ENCODE measurements at regions of chr1 and their contacts with region 1.

Region 1: GRCh38 chr1:145891587-145892485 is 6.2 kb upstream of the ANKRD35 start:
- DNase-seq: peak; percentile 98
- H3K4me3 ChIP-seq: peak overlapping the region; percentile 33
- H3K27ac ChIP-seq: peak overlapping the region; percentile 99
- H3K27me3 ChIP-seq: no peaks in the 10 kb centered on the region
- CTCF ChIP-seq: peak; percentile 93

Region 2: DNA sequence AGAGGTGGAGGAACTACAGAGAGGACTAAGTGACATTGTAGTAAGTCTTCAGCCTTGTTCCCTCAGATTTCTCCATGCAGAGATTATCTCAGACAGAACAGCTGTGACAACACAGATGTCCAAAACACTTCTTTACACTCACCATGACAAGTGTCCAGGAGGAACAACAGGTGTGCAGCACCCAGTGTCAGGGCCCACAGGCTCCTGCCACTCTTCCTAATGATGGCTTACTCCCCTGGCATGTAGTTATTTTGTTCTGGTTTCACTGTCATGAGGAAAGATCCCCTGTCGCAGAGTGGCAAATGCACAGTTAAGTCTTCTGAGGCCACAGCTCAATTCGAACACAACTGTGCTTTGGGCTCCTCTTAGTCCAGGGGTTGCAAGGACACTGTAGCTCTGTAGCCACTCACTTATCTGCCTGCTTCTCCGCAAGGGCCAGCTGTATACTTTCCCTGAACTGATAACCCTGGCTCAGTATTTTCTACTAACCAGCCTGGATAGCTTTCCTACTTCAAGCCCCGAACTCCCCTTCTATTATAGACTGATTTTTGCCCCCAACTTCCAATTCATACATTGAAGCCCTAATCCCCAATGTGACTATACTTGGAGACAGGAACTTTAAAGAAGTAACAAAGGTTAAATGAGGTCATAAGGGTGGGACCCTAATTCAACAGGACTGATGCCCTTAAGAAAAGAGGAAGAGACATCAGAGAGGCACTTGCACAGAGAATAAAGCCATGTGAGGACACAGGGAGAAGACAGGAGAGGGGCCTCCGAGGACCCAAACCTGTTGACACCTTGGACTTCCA is 195.8 kb before region 1 on chr1:
- CTCF ChIA-PET with region 1: no interaction called
- POLR2A ChIA-PET with region 1: no interaction called
- DNase-seq: no peak
- H3K4me3 ChIP-seq: no peak overlapping the region
- H3K27ac ChIP-seq: no peak overlapping the region
- H3K27me3 ChIP-seq: no peaks in the 10 kb centered on the region
- CTCF ChIP-seq: no peak

Region 3: DNA sequence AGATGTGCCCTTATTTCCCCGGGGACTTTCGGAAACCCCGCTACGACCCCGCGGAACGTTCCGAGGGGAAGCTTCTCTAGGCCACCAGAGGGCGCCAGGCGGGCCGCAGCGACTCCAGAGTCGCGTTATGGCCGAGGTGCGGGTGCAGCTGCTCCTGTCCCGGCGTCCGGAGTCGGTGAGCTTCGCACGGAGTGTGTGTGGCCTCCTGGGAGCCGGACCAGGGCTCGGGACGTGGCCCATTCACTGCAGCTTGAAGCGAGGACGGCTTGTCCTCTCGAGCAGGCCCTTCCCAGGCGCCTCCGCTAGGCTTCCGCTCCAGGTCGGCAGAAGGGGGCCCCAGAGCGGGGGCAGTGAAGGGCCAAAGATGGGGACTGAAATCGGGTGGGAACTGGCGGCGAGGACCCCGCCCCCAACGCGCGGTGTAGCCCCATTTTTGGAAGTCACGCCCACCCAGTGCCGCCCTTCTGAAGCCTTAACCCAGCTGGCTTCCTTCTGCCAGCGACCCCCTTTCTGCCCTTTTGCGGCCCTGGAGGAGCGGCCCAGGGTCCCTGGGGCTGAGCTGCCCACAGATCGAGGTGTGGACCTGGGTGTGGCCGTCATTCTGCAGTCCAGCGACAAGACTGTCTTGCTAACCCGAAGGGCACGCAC is 46.2 kb before region 1 on chr1 and contains the start of gene NUDT17:
- CTCF ChIA-PET with region 1: interaction called, 11 read pairs
- POLR2A ChIA-PET with region 1: interaction called, 5 read pairs
- DNase-seq: peak; percentile 24
- H3K4me3 ChIP-seq: peak within 1 kb of the TSS; percentile 70
- H3K27ac ChIP-seq: peak within 1 kb of the TSS; percentile 31
- H3K27me3 ChIP-seq: no peaks in the 10 kb centered on the region
- CTCF ChIP-seq: peak; percentile 93
- polyA plus RNA-seq, gene NUDT17: 3.3 and 3.7 TPM in 2 replicates

Region 4: DNA sequence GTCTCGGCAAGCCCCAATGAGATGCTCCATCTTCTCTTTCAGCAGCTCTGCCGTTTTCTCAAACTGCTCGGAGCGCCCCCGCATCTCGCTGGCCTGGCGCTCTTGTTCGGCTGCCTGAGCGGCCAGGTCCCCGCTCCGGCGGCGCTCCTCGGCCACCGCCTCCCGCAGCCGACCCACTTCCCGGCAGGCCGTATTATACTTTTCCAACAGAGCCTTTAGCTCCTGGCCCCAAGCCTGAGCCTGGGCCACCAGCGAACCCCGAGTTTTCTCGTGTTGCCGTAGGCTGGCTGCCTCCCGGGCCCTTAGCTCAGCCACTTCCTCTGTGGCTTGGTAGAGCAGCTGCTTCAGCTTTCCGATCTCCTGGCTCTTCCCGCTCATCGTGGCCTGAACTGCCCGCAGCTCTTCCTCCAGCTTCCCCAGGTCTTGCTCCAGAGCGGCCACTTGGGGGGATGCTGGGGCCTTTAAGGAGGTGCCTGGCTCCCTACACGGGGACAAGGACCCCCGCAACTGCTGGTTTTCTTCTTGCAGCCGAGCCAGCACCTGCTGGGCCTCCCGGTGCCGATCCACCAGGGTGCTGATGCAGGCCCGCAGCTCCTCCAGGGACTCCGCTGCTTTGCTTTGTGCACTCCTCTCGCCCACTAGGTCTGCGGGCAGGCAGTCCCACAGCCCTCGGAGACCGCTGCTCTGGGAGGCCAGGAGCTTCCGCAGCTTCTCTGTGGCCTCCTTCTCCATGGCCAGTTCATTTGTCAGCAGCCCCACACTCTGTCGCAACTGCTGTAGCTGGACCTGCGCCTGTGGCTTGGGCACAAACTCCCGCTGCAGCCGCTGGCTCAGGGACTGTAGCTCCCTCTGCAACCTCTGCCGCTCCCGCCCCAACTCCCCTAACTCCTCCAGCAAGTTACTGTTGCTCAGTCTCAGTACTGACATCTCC is 19.6 kb before region 1 on chr1:
- CTCF ChIA-PET with region 1: interaction called, 21 read pairs
- POLR2A ChIA-PET with region 1: interaction called, 8 read pairs
- DNase-seq: no peak
- H3K4me3 ChIP-seq: peak overlapping the region; percentile 59
- H3K27ac ChIP-seq: peak overlapping the region; percentile 77
- H3K27me3 ChIP-seq: peaks cover 8% of the 10 kb centered on the region
- CTCF ChIP-seq: no peak

Region 5: DNA sequence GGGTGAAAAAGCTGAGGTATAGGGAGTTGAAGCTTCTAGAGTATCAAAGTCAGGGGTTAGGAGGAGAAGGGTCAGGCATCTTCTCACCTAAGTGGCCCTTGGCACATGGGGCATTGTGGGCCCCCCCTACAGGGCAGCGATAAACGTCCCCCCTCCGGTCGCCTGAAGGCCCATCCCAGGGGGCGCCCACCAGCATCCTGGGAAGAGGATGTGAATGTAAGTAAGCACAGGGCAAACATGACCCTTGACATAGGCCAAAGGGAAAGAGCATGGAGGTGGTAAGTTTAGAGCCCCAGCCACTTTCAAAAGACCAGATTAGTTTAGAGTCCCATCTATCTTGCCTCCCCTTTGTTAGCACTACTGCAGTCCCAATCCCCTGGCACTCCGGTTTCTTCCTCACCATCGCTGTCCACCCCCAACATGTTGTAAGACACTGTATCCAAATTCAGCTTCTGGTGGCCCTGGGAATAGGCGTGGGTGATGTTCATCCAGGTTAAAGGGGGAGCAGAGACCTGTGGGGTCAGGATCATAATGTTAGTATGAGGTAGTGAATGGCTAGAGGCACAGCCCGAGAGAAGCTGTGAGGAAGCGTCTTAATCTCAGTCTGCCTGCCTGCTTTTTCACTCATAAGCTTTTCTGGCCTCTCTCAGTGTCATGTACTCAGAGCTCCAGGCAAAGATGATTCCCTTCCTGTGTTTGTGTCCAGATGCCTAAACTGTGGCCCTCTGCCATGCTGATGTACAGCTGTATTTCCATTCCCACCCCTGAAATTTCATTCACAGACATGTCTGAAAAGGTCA is 15.3 kb after region 1 on chr1:
- CTCF ChIA-PET with region 1: interaction called, 133 read pairs
- POLR2A ChIA-PET with region 1: interaction called, 7 read pairs
- DNase-seq: no peak
- H3K4me3 ChIP-seq: no peak overlapping the region
- H3K27ac ChIP-seq: no peak overlapping the region
- H3K27me3 ChIP-seq: no peaks in the 10 kb centered on the region
- CTCF ChIP-seq: no peak

Region 6: GRCh38 chr1:145927063-145927886 is 35.4 kb after region 1 on chr1 and contains the start of gene RBM8A:
- CTCF ChIA-PET with region 1: interaction called, 17 read pairs
- POLR2A ChIA-PET with region 1: interaction called, 9 read pairs
- DNase-seq: peak; percentile 95
- H3K4me3 ChIP-seq: peak within 1 kb of the TSS; percentile 85
- H3K27ac ChIP-seq: peak within 1 kb of the TSS; percentile 80
- H3K27me3 ChIP-seq: no peaks in the 10 kb centered on the region
- CTCF ChIP-seq: peak; percentile 68
- polyA plus RNA-seq, gene RBM8A: 134 and 158 TPM in 2 replicates

Region 7: GRCh38 chr1:145947551-145947950 is 55.7 kb after region 1 on chr1:
- CTCF ChIA-PET with region 1: no interaction called
- POLR2A ChIA-PET with region 1: no interaction called
- DNase-seq: no peak
- H3K4me3 ChIP-seq: no peak overlapping the region
- H3K27ac ChIP-seq: no peak overlapping the region
- H3K27me3 ChIP-seq: no peaks in the 10 kb centered on the region
- CTCF ChIP-seq: no peak

Region 8: GRCh38 chr1:145978854-145979759 is 87.3 kb after region 1 on chr1:
- CTCF ChIA-PET with region 1: interaction called, 10 read pairs
- POLR2A ChIA-PET with region 1: no interaction called
- DNase-seq: peak; percentile 99
- H3K4me3 ChIP-seq: peak overlapping the region; percentile 44
- H3K27ac ChIP-seq: peak overlapping the region; percentile 97
- H3K27me3 ChIP-seq: no peaks in the 10 kb centered on the region
- CTCF ChIP-seq: peak; percentile 48; the same call in 1 of the 2 replicates

Region 9: GRCh38 chr1:146012737-146013403 is 121.0 kb after region 1 on chr1:
- CTCF ChIA-PET with region 1: interaction called, 24 read pairs
- POLR2A ChIA-PET with region 1: no interaction called
- DNase-seq: peak; percentile 57
- H3K4me3 ChIP-seq: no peak overlapping the region
- H3K27ac ChIP-seq: no peak overlapping the region
- H3K27me3 ChIP-seq: no peaks in the 10 kb centered on the region
- CTCF ChIP-seq: peak; percentile 75

Measured in AG04450 (cell line).